ENCODE measurements at regions of chr3 and their contacts with region 1.

Region 1: GRCh38 chr3:148943506-148944205 is 47.7 kb upstream of the GYG1 start:
- DNase-seq: no peak
- H3K4me3 ChIP-seq: no peak overlapping the region
- H3K27ac ChIP-seq: no peak overlapping the region
- H3K4me1 ChIP-seq: peaks cover 0 to 3% (median 2%) of the 10 kb centered on the region in 4 donors
- H3K27me3 ChIP-seq: no peaks in the 10 kb centered on the region
- CTCF ChIP-seq: peak; percentile 61 to 75 (median 67)
- EP300 ChIP-seq: no peak
- POLR2A ChIP-seq: no peak

Region 2: DNA sequence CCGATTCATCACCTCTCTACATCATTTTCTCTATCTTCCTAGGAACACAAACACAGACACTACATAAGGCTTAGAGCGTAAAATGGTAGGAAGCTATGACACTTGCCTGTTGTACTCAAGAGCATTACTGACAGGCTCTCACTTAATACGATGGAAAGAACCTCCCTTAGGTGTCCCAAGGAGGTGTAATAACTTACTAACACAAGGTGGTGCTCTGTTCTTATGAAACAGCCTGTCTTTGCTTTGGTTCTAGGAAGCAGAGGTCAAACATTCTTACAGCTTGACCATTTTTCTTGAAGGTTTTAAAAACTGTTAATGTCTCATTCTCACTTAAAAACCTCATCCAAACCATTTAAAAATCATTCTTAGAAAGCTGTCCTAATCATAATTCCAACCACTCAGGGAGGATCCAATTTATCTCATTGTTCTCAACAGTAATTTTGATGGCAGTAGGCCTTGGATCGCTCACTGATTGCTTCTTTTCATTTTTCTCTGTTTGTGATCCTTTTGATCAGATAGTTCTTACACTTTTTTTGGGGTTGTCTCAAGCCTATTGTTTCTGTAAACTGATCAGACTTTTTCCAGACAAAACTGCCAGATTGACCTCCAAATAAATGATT is 563.8 kb before region 1 on chr3:
- intact Hi-C with region 1: loop called (anchors 2 kb)
- DNase-seq: no peak
- H3K4me3 ChIP-seq: no peak overlapping the region
- H3K27ac ChIP-seq: no peak overlapping the region
- H3K4me1 ChIP-seq: no peaks in the 10 kb centered on the region
- H3K27me3 ChIP-seq: no peaks in the 10 kb centered on the region
- CTCF ChIP-seq: peak; percentile 50 to 63 (median 62)
- EP300 ChIP-seq: no peak
- POLR2A ChIP-seq: no peak

Region 3: GRCh38 chr3:148718982-148719862 is 224.4 kb before region 1 on chr3:
- intact Hi-C with region 1: loop called (anchors 10 kb)
- DNase-seq: no peak
- H3K4me3 ChIP-seq: no peak overlapping the region
- H3K27ac ChIP-seq: no peak overlapping the region
- H3K4me1 ChIP-seq: peaks cover 0 to 27% (median 12%) of the 10 kb centered on the region in 4 donors
- H3K27me3 ChIP-seq: no peaks in the 10 kb centered on the region
- CTCF ChIP-seq: peak; percentile 32 to 53 (median 45)
- EP300 ChIP-seq: no peak
- POLR2A ChIP-seq: no peak

Region 4: GRCh38 chr3:148861277-148861869 is 82.3 kb before region 1 on chr3:
- intact Hi-C with region 1: loop called (anchors 2 kb)
- DNase-seq: no peak
- H3K4me3 ChIP-seq: no peak overlapping the region
- H3K27ac ChIP-seq: no peak overlapping the region
- H3K4me1 ChIP-seq: no peaks in the 10 kb centered on the region
- H3K27me3 ChIP-seq: peaks cover 0 to 4% (median 0%) of the 10 kb centered on the region in 4 donors
- CTCF ChIP-seq: peak; percentile 59 to 77 (median 75)
- EP300 ChIP-seq: no peak
- POLR2A ChIP-seq: no peak